ENCODE measurements at regions of chrX and their contacts with region 1.

Region 1: DNA sequence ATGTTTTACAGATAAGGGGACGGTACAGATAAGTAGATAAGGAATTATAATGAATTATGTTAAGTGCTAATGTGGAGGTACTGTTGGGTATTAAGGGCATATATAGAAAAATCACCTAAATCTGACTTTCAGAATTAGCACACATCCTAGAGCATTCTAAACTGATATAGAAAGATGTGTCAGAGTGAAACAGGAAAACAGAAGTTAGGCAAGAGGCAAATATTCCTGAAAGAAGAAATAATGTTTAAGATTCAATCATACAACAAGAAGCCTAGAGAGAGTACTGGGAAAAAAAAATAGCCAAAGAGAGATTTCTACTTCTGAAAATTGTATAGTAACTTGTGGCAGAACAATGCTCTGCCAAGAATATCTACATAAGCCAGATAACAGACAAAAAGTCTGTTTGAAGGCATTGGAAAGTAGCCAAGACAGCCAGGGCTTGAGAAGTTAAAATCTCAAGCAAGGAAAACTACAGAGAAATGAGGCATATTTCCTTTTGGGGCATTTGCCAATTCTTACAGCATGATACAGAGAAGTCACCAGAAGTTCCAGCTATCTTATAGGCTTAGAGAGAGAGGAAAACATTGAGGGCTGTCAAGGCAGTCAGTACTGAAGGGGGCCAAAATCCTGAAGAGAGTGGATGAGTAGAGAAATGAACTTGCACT is 646.0 kb downstream of the RPA4 start:
- DNase-seq: peak; percentile 91
- H3K4me3 ChIP-seq: no peak overlapping the region
- H3K27ac ChIP-seq: peak overlapping the region; percentile 67
- H3K4me1 ChIP-seq: peaks cover 27% of the 10 kb centered on the region
- H3K27me3 ChIP-seq: no peaks in the 10 kb centered on the region
- CTCF ChIP-seq: no peak
- POLR2A ChIP-seq: no peak

Region 2: GRCh38 chrX:96906741-96907140 is 622.9 kb before region 1 on chrX:
- CTCF ChIA-PET with region 1: no interaction called
- POLR2A ChIA-PET with region 1: no interaction called
- dilution Hi-C with region 1: no loop called
- intact Hi-C with region 1: loop called (anchors 5 kb)
- DNase-seq: peak; percentile 90
- H3K4me3 ChIP-seq: no peak overlapping the region
- H3K27ac ChIP-seq: peak overlapping the region; percentile 86
- H3K4me1 ChIP-seq: peaks cover 31% of the 10 kb centered on the region
- H3K27me3 ChIP-seq: no peaks in the 10 kb centered on the region
- CTCF ChIP-seq: no peak
- POLR2A ChIP-seq: no peak

Region 3: DNA sequence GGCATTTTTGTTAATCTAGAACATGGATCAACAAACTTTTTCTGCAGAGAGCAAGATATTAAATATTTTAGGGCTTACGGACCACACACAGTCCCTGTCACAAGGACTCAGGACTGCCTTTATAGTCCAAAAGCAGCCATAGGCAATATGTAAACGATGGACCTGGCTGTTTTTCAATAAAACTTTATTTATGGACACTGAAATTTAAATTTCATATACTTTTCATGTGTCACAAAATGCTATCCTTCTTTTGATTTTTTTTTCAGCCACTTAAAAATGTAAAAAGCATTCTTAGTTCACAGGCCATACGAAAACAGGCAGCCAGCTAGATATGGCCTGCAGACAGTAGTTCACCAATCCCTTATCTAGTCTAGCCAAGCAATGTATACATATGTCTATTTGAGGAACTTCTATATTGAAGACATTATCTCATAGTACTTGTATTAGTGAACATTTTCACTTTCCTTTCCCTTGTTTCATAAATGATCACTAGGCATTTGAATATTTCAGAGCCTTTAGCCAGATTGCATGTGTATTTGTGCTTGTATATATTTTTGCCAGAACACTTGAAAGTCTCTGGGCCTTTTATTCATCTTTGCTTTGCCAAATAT is 295.1 kb before region 1 on chrX:
- CTCF ChIA-PET with region 1: no interaction called
- POLR2A ChIA-PET with region 1: no interaction called
- dilution Hi-C with region 1: no loop called
- intact Hi-C with region 1: loop called (anchors 10 kb)
- DNase-seq: no peak
- H3K4me3 ChIP-seq: no peak overlapping the region
- H3K27ac ChIP-seq: no peak overlapping the region
- H3K4me1 ChIP-seq: peaks cover 11% of the 10 kb centered on the region
- H3K27me3 ChIP-seq: no peaks in the 10 kb centered on the region
- CTCF ChIP-seq: no peak
- POLR2A ChIP-seq: no peak

Region 4: GRCh38 chrX:97587167-97587566 is 57.5 kb after region 1 on chrX:
- CTCF ChIA-PET with region 1: no interaction called
- POLR2A ChIA-PET with region 1: no interaction called
- dilution Hi-C with region 1: no loop called
- intact Hi-C with region 1: no loop called
- DNase-seq: no peak
- H3K4me3 ChIP-seq: no peak overlapping the region
- H3K27ac ChIP-seq: no peak overlapping the region
- H3K4me1 ChIP-seq: no peaks in the 10 kb centered on the region
- H3K27me3 ChIP-seq: no peaks in the 10 kb centered on the region
- CTCF ChIP-seq: no peak
- POLR2A ChIP-seq: no peak

Region 5: GRCh38 chrX:97597954-97598353 is 68.3 kb after region 1 on chrX:
- CTCF ChIA-PET with region 1: no interaction called
- POLR2A ChIA-PET with region 1: no interaction called
- dilution Hi-C with region 1: no loop called
- intact Hi-C with region 1: loop called (anchors 1 kb)
- DNase-seq: peak; percentile 34
- H3K4me3 ChIP-seq: no peak overlapping the region
- H3K27ac ChIP-seq: peak overlapping the region; percentile 85
- H3K4me1 ChIP-seq: peaks cover 20% of the 10 kb centered on the region
- H3K27me3 ChIP-seq: no peaks in the 10 kb centered on the region
- CTCF ChIP-seq: no peak
- POLR2A ChIP-seq: no peak

Region 6: DNA sequence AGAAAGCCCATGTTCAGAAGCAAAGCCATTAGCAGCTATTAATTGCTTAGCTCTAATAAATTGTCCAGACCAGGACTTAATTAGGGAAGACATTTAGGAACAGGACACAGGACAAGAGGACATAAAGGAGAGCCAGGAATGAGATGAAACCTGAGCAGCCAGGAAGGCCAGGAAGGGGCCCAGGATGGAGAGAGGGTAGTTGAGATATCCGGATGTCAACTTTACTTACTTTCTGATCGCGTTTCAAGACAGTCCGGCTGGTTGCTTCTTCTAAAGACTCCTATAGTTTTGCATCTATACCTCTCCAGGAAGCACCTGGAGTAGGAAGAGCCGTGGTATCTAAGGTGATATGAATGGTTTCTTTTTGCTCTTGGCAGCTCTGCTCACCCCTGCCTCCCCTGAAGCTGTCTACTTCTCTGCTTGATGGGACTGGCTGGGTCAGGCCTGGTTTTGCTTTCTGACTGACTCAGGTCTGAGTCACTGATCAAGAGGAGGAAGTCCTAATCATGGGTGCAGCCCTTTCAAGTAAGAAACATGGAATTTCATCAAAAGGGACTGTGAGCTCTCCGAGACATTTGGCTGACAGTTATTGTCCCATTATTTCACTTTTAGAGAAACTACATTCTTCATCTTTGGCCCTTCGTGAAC is 87.3 kb after region 1 on chrX:
- CTCF ChIA-PET with region 1: no interaction called
- POLR2A ChIA-PET with region 1: no interaction called
- dilution Hi-C with region 1: no loop called
- intact Hi-C with region 1: loop called (anchors 5 kb)
- DNase-seq: peak; percentile 77
- H3K4me3 ChIP-seq: peak overlapping the region in 2 of 3 experiments; percentile 8 to 37
- H3K27ac ChIP-seq: peak overlapping the region; percentile 63
- H3K4me1 ChIP-seq: peaks cover 15% of the 10 kb centered on the region
- H3K27me3 ChIP-seq: no peaks in the 10 kb centered on the region
- CTCF ChIP-seq: no peak
- POLR2A ChIP-seq: no peak

Region 7: GRCh38 chrX:97685753-97686152 is 156.1 kb after region 1 on chrX:
- CTCF ChIA-PET with region 1: no interaction called
- POLR2A ChIA-PET with region 1: interaction called, 3 read pairs
- dilution Hi-C with region 1: no loop called
- intact Hi-C with region 1: loop called (anchors 2 kb)
- DNase-seq: peak; percentile 47
- H3K4me3 ChIP-seq: no peak overlapping the region
- H3K27ac ChIP-seq: no peak overlapping the region
- H3K4me1 ChIP-seq: no peaks in the 10 kb centered on the region
- H3K27me3 ChIP-seq: no peaks in the 10 kb centered on the region
- CTCF ChIP-seq: peak; percentile 32 to 48
- POLR2A ChIP-seq: no peak

Measured in endothelial cell of umbilical vein (primary cell).